Left cardiac atrium (tissue), 4 donors: ENCODE measurements at regions of chr6 and their contacts with region 1.

Region 1: GRCh38 chr6:118372413-118372812 is 175.7 kb upstream of the PLN start:
- DNase-seq: peak; percentile 61
- ATAC-seq: peak; percentile 91 to 92

Region 2: DNA sequence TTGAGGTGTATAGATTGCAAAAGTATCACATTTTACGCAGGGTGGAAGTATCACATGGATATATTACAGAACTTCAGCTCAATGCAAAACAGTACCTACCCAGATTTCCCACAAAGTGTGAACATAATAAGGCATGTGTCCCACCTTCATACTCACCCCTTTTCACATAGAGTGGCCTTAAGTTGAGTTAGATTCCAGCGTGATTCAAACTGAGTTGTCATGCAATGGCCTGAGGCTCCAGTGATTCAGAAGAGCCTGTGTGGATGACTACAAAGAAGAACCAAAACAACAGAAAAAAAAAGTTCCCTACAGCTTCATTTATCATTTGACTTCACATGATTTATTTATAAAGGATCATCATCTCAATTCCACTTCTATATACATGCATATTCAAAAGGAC is 155.7 kb before region 1 on chr6:
- intact Hi-C with region 1: no loop called
- DNase-seq: no peak
- ATAC-seq: no peak

Region 3: DNA sequence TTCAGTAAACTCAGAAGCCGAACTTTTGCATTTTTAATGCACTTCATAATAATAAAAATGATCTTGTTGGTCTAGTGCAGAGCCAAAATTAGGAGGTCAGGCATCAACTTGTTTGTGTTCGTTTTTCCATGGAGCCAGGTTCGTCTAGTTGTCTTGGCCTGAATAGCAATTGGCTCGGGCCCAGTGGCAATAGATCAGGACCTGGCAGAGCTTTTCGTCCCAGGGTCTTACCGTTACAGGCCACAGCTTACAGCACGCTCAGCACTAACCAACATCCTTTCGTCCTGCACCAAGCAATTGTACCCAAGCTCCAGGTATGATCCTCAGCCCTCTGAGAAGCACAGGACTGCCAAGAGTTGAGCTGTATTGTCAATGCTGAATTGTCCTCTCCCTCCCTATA is 64.8 kb before region 1 on chr6:
- intact Hi-C with region 1: loop called in 1 of 2 experiments (anchors 5 kb)
- DNase-seq: peak; percentile 51
- ATAC-seq: peak; percentile 38 to 60

Region 4: DNA sequence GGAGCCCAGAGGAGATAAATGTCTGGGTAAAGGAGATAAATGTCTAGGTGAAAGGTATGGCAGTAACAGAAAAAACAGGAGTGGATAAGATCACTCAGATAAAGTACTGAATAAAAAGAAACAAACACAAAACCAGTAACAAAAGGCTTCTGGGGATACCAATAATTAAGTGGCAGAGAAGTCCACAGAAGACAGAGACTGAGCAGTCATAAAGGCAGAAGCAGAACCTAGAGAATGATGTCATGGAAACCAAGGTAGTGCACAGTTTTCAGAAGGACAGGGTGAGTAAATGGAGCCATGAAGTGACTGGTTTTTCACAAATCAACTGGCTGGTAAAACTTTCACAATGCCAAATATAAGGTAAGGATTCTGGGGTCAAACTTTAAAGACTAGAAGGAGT is 94.8 kb after region 1 on chr6:
- intact Hi-C with region 1: loop called in 1 of 2 experiments (anchors 5 kb)
- DNase-seq: no peak
- ATAC-seq: no peak

Region 5: DNA sequence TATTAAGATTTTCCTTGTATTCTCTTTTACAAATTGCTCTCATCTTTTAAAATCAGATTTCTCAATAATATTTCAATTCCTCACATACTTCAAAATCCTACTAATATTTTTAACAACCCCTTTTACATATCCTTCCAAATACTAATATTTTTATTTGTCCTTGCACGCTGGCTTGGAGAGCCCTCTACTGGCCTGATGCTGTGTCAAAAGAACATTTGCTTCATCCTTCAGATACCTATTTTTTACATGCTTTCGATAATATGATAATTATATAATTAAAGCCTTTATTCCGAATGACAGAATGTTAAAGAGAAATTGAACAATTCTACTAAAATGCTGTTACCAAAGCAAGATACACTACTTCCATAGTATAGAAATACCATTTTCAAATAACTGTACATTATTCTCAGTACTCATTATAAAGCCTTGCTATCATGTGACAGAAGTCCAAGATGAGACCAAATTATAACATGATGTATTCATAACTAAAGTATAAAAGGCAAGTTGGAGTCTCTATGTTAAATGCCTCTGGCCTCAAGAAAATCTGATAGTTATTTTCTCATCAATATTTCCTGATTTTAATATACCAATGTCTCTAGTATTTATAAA is 136.7 kb after region 1 on chr6:
- intact Hi-C with region 1: loop called in 1 of 2 experiments (anchors 5 kb)
- DNase-seq: no peak
- ATAC-seq: no peak

Region 6: GRCh38 chr6:118748311-118749062 is 376.1 kb after region 1 on chr6:
- intact Hi-C with region 1: no loop called
- DNase-seq: peak; percentile 29
- ATAC-seq: peak; percentile 47 to 63